A673 (cell line): ENCODE measurements at regions of chr6 and their contacts with region 1.

Region 1: DNA sequence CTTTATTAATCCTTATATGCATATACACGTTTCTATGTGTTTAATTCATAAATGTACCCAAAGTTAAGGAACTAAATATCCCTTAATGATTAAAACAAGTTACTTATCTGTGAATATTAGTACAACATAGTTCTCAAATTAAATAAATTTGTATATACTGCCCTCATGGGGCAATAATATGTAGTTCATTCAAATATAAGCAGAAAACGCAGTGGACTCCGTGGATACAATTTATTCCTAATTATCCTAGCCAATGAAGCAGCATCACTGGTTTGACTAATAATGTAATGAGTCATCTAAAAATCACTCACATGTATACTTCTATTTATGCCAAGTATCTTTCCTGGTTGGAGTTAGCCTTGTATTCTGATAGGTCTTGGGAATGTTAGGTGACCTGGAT is 111.6 kb downstream of the TBC1D32 start:
- DNase-seq: peak; percentile 36
- H3K4me3 ChIP-seq: no peak overlapping the region
- H3K27ac ChIP-seq: no peak overlapping the region
- H3K4me1 ChIP-seq: no peaks in the 10 kb centered on the region
- H3K27me3 ChIP-seq: no peaks in the 10 kb centered on the region
- CTCF ChIP-seq: peak; percentile 40; the same call in 1 of the 2 replicates

Region 2: DNA sequence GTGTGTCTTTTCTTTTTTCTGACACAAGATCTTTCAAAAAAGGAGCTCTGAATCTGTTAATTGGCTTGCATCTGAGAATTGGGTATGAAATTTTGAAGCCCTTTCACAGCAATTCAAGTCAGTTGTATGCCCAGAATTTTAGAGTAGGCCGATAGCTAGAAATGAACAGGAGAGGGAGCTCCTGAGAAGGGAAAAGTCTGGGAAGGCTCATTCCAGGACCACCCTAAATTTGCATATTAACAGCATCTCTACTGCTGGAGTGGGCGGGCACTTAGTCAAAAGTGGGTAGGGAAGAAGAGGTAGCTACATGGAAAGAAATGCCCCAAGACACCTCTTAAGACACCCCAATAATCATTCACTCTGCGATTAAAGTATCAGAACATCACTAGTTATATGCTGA is 816.7 kb before region 1 on chr6:
- CTCF ChIA-PET with region 1: no interaction called
- POLR2A ChIA-PET with region 1: no interaction called
- intact Hi-C with region 1: loop called (anchors 10 kb)
- DNase-seq: peak; percentile 43
- H3K4me3 ChIP-seq: no peak overlapping the region
- H3K27ac ChIP-seq: no peak overlapping the region
- H3K4me1 ChIP-seq: no peaks in the 10 kb centered on the region
- H3K27me3 ChIP-seq: no peaks in the 10 kb centered on the region
- CTCF ChIP-seq: peak; percentile 51